MCF 10A (cell line): ENCODE measurements at regions of chr2 and their contacts with region 1.

Region 1: GRCh38 chr2:54665436-54665856 is 58.0 kb upstream of the EML6 start:
- DNase-seq: peak; percentile 69
- H3K4me3 Mint-ChIP-seq: peak overlapping the region; percentile 30
- H3K27ac Mint-ChIP-seq: peak overlapping the region; percentile 41
- H3K4me1 Mint-ChIP-seq: peaks cover 29% of the 10 kb centered on the region
- H3K27me3 Mint-ChIP-seq: no peaks in the 10 kb centered on the region
- CTCF ChIP-seq: peak; percentile 43

Region 2: DNA sequence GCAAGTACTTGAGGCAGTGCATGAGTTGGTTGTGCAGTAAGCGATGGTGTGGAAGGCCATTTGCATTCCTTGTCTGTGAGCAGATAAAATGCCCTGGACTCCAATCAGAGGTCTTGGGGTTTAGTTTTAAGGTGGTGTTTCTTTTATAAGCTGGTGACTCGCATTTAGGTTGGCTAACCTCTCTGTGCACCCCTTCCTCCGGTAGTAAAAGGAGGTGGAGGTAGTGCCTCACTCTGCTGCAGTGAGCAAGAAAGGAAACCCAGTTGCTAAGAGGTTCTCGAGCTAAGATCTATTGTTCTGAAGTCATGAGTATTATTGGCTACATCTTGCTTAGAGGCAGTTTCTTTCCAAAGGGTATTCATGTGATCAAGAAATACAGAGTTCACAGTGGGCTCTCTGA is 16.3 kb before region 1 on chr2:
- CTCF ChIA-PET with region 1: interaction called, 36 read pairs
- POLR2A ChIA-PET with region 1: no interaction called
- intact Hi-C with region 1: no loop called
- DNase-seq: no peak
- H3K4me3 Mint-ChIP-seq: no peak overlapping the region
- H3K27ac Mint-ChIP-seq: no peak overlapping the region
- H3K4me1 Mint-ChIP-seq: no peaks in the 10 kb centered on the region
- H3K27me3 Mint-ChIP-seq: no peaks in the 10 kb centered on the region
- CTCF ChIP-seq: no peak